Panc1 (cell line): ENCODE measurements at regions of chr3 and their contacts with region 1.

Region 1: GRCh38 chr3:25843332-25843731 is 53.4 kb downstream of the OXSM start:
- DNase-seq: no peak
- ATAC-seq: no peak
- H3K4me3 ChIP-seq: no peak overlapping the region
- H3K27ac ChIP-seq: no peak overlapping the region
- H3K4me1 ChIP-seq: no peaks in the 10 kb centered on the region
- H3K27me3 ChIP-seq: peaks cover 2% of the 10 kb centered on the region; the same call in 1 of the 2 replicates
- CTCF ChIP-seq: peak; percentile 6; the same call in 1 of the 2 replicates

Region 2: DNA sequence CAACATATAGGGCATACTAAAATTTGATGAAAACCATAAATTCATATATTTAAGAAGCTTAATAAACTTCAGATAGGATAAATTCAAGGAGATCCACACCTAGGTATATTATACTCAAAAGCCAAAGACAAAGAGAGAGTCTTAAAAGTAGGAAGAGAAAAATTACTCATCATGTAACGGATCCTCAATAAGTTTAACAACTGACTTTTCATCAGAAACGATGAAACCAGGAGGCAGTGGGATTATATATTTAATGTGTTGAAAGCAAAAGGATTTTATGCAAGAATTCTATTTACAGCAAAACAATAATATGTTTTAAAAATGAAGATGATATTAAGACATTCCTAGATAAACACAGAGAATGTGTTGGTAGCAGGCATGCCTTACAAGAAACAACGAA is 149.3 kb after region 1 on chr3:
- CTCF ChIA-PET with region 1: no interaction called
- POLR2A ChIA-PET with region 1: no interaction called
- in situ Hi-C with region 1: no loop called
- intact Hi-C with region 1: no loop called
- DNase-seq: no peak
- ATAC-seq: no peak
- H3K4me3 ChIP-seq: no peak overlapping the region
- H3K27ac ChIP-seq: no peak overlapping the region
- H3K4me1 ChIP-seq: no peaks in the 10 kb centered on the region
- H3K27me3 ChIP-seq: no peaks in the 10 kb centered on the region
- CTCF ChIP-seq: no peak

Region 3: DNA sequence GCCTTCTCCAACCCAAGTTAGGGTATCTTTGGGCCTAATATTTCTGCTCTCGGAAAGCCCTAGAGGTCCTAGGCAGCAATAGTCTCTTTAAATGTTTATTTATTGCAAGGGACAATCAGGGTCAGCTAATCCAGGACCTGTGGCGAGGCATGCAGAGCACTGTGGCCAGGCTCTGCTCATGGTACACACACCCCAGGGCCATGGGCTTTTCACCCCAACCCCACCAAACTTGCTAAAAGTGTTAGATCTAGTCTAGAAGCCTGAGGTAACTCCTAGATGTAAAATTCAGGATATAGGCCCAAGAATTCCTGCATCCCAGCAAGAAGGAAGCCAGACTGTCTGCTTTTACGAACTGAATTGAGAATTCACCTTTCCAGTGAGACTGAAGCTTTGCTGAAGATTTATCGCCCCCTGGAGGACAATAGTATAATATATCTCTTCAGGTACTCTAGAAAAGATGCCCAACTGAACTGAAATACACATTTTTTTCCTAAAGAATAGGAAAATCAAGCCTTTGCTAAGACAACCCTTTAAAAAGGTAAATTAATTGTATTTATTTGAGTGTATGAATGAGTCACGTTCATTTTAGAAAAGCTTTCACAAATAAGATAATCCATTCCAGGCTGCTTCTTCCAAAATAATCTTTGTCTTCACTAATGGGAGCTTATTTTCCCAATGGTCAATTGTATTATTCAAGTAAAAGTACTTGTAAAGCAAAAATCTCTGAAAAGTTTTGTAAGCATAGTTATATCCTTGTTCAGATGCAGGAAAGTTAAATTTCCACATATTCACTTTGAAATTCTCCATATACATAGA is 869.1 kb after region 1 on chr3:
- CTCF ChIA-PET with region 1: no interaction called
- POLR2A ChIA-PET with region 1: no interaction called
- in situ Hi-C with region 1: no loop called
- intact Hi-C with region 1: loop called (anchors 10 kb)
- DNase-seq: peak; percentile 5
- ATAC-seq: no peak; the same call in 1 of the 2 replicates
- H3K4me3 ChIP-seq: no peak overlapping the region
- H3K27ac ChIP-seq: no peak overlapping the region
- H3K4me1 ChIP-seq: no peaks in the 10 kb centered on the region
- H3K27me3 ChIP-seq: no peaks in the 10 kb centered on the region
- CTCF ChIP-seq: peak; percentile 58

Region 4: GRCh38 chr3:27333843-27334242 is 1490.5 kb after region 1 on chr3:
- CTCF ChIA-PET with region 1: no interaction called
- POLR2A ChIA-PET with region 1: no interaction called
- in situ Hi-C with region 1: no loop called
- intact Hi-C with region 1: no loop called
- DNase-seq: no peak
- ATAC-seq: no peak
- H3K4me3 ChIP-seq: no peak overlapping the region
- H3K27ac ChIP-seq: no peak overlapping the region
- H3K4me1 ChIP-seq: no peaks in the 10 kb centered on the region
- H3K27me3 ChIP-seq: no peaks in the 10 kb centered on the region
- CTCF ChIP-seq: no peak